CD8-positive, alpha-beta T cell (primary cell): ENCODE measurements at regions of chr7 and their contacts with region 1.

Region 1: DNA sequence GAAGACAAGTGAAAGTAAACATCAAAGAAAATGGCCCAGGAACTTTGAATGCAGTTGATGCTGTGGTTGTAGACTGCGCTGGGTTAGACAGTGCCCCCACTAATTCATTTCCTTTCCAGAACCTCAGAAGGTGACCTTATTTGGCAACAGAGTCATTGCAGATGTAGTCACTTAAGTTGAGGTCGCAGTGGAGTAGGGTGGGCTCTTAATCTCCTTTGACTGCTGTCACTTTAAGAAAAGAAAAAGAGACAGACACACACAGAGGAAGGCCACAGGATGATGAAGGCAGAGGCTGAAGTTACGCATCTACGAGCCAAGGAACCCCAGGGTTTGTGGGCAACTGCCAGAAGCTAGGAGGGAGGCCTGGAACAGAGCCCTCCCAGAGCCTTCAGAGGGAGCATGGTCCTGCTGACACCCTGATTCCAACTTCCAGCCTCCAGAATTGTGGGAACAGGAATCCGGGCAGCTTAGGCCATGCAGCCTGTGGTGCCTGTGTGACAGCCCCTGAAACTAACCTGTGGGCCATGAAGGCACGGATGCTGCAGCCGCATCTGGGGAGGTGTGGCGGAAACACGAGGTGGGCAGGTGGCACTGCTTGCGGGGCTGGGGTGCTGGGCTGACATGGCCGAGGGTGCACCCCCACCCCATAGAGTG is 107.6 kb downstream of the PRKAG2 start:
- DNase-seq: peak in 8 of 9 experiments; percentile 21 to 90 (median 62)
- ATAC-seq: peak; percentile 93
- H3K4me3 ChIP-seq: peak overlapping the region; percentile 42 to 51
- H3K4me3 Mint-ChIP-seq: peak overlapping the region; percentile 77
- H3K27ac ChIP-seq: peak overlapping the region; percentile 63 to 78
- H3K27ac Mint-ChIP-seq: peak overlapping the region; percentile 96
- H3K4me1 ChIP-seq: peaks cover 67% of the 10 kb centered on the region
- H3K4me1 Mint-ChIP-seq: peaks cover 74% of the 10 kb centered on the region
- H3K27me3 ChIP-seq: no peaks in the 10 kb centered on the region
- H3K27me3 Mint-ChIP-seq: no peaks in the 10 kb centered on the region
- CTCF ChIP-seq: no peak

Region 2: GRCh38 chr7:151754142-151754590 is 15.1 kb before region 1 on chr7:
- CTCF ChIA-PET with region 1: interaction called, 41 read pairs
- POLR2A ChIA-PET with region 1: no interaction called
- intact Hi-C with region 1: loop called (anchors 1 to 2 kb)
- DNase-seq: peak in 3 of 9 experiments; percentile 17 to 48 (median 34)
- ATAC-seq: no peak
- H3K4me3 ChIP-seq: no peak overlapping the region
- H3K4me3 Mint-ChIP-seq: no peak overlapping the region
- H3K27ac ChIP-seq: no peak overlapping the region
- H3K27ac Mint-ChIP-seq: no peak overlapping the region
- H3K4me1 ChIP-seq: peaks cover 20% of the 10 kb centered on the region
- H3K4me1 Mint-ChIP-seq: peaks cover 24% of the 10 kb centered on the region
- H3K27me3 ChIP-seq: no peaks in the 10 kb centered on the region
- H3K27me3 Mint-ChIP-seq: no peaks in the 10 kb centered on the region
- CTCF ChIP-seq: no peak